Endothelial cell of umbilical vein (primary cell): ENCODE measurements at regions of chr6 and their contacts with region 1.

Region 1: DNA sequence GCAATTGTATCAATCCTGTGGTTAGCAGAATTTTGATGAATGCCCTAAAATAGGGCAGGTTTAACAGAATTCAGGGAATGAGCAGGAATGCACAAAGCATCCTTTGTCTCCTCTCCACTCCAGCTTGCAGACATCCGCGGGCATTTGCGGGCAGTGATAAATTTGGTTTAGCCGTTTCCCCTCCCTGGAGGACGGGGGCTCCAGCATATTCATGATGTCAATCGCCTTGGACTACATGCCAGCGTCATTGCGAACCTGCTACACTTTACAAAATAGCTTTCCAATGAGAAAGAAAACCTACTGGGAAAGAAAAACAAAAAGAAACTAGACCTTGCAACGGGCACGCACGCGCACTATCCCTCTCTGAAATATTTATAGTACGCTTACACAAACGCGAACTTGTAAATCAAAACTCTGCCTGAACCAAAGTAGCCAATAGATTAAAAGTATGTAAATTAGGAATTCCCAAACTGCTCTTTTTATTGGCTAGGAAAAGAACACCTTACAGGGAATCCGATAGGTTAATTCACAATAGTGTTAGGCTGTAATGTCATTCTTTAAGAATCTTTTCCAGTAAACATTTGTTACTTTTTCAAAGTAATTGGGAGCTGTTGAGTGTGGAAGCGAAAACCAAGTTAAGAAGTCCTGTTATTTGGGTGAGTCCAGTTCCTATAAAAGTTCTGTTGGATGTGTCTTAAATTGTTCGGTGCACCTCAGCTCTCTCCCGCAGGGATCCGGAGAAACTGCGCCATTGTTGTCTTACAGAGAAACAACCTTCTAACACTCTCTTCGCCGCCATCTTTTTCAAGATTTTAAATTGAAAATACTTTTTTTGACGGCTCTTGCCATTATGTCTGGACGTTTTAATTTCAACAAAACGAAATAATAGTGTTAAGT is 136.7 kb downstream of the HFE start:
- DNase-seq: peak; percentile 94
- H3K4me3 ChIP-seq: peak overlapping the region; percentile 47 to 94 (median 77)
- H3K27ac ChIP-seq: peak overlapping the region; percentile 96
- H3K4me1 ChIP-seq: peaks cover 14% of the 10 kb centered on the region
- H3K27me3 ChIP-seq: no peaks in the 10 kb centered on the region
- CTCF ChIP-seq: no peak
- POLR2A ChIP-seq: peak; percentile 71

Region 2: DNA sequence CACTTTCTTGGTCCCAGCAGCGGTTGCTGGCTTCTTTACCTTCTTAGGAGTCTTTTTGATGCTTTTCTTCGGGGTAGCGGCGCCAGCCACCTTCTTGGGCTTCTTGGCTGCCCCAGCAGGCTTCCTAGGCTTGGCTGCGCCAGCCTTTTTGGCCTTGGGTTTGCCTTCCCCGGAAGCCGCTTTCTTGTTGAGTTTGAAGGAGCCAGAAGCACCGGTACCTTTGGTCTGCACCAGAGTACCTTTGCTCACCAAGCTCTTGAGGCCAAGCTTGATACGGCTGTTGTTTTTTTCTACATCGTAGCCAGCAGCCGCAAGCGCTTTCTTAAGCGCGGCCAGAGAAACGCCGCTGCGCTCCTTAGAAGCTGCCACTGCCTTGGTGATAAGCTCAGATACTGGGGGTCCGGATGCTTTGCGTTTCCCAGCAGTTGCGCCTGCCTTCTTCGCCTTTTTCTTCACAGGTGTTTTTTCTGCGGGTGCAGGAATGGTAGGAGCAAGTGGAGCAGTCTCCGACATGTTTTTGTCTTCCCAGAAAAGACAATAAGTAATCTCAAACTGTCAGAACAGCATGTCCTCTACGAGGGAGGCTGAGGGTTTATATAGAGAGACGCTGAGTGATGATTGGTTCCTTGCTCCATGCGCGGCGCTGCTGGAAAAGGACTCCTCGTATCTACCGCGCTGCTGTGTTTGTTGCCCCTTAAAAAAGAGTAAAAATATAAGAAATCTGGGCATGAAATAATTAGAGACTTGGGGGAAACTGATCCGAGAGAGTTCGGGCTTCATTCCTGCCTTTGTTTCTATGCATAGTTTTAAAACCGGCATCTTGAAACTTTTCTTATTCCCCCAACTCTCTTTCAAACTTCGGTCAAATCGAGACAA is 10.8 kb after region 1 on chr6:
- CTCF ChIA-PET with region 1: interaction called, 13 read pairs
- POLR2A ChIA-PET with region 1: interaction called, 19 read pairs
- dilution Hi-C with region 1: no loop called
- intact Hi-C with region 1: loop called (anchors 1 kb)
- DNase-seq: peak; percentile 89
- H3K4me3 ChIP-seq: peak overlapping the region; percentile 30 to 73 (median 59)
- H3K27ac ChIP-seq: peak overlapping the region; percentile 83
- H3K4me1 ChIP-seq: peaks cover 25% of the 10 kb centered on the region
- H3K27me3 ChIP-seq: no peaks in the 10 kb centered on the region
- CTCF ChIP-seq: no peak
- POLR2A ChIP-seq: peak; percentile 5

Region 3: GRCh38 chr6:26240154-26241032 is 16.5 kb after region 1 on chr6:
- CTCF ChIA-PET with region 1: interaction called, 3 read pairs
- POLR2A ChIA-PET with region 1: interaction called, 19 read pairs
- dilution Hi-C with region 1: no loop called
- intact Hi-C with region 1: loop called (anchors 2 kb)
- DNase-seq: peak; percentile 85
- H3K4me3 ChIP-seq: peak overlapping the region; percentile 40 to 77 (median 66)
- H3K27ac ChIP-seq: peak overlapping the region; percentile 79
- H3K4me1 ChIP-seq: peaks cover 3% of the 10 kb centered on the region
- H3K27me3 ChIP-seq: no peaks in the 10 kb centered on the region
- CTCF ChIP-seq: no peak
- POLR2A ChIP-seq: peak; percentile 98

Region 4: DNA sequence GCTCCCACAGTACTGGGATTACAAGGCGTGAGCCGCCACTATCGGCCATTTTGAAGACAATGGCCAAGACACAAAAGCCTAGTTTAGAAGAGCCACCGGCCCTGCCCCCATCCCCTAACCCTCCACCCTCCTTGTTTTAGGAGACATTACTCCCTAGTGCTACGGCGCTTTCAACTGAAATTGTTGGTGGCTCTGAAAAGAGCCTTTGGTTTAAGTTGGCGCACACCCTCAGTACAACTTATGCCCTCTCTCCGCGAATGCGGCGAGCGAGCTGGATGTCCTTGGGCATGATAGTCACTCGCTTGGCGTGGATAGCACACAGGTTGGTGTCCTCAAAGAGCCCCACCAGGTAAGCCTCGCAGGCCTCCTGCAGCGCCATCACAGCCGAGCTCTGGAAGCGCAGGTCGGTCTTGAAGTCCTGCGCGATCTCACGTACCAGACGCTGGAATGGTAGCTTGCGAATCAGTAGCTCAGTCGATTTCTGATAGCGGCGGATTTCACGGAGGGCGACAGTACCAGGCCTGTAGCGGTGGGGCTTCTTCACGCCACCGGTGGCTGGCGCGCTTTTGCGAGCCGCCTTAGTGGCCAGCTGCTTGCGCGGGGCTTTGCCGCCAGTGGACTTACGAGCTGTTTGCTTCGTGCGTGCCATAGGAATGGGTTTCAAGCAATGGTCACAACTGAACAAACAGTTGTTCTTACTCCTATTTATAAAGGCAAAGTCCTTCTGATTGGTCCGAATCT is 26.2 kb after region 1 on chr6:
- CTCF ChIA-PET with region 1: interaction called, 28 read pairs
- POLR2A ChIA-PET with region 1: interaction called, 19 read pairs
- dilution Hi-C with region 1: no loop called
- intact Hi-C with region 1: loop called (anchors 1 kb)
- DNase-seq: peak; percentile 87
- H3K4me3 ChIP-seq: peak overlapping the region; percentile 27 to 85 (median 49)
- H3K27ac ChIP-seq: peak overlapping the region; percentile 67
- H3K4me1 ChIP-seq: peaks cover 3% of the 10 kb centered on the region
- H3K27me3 ChIP-seq: no peaks in the 10 kb centered on the region
- CTCF ChIP-seq: peak; percentile 28 to 52
- POLR2A ChIP-seq: peak; percentile 87

Region 5: DNA sequence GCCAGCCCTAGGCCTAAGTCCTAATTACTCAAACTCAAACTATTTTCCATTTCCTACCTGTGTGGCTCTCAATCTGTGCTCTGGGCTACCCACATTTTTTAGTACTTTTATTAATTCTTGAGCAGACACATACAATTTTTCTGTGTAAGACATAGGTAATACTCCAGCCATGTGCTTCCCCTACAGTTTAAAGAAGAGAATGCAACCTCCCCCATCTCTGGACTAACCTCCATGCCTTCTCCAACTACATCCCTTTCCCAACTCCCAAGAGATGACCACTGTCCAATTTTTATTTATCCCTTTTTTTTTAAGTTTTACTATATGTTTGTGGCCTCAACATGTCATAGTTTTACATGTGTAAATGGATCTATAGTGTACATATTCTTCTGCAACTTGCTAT is 320.1 kb after region 1 on chr6:
- CTCF ChIA-PET with region 1: no interaction called
- POLR2A ChIA-PET with region 1: no interaction called
- dilution Hi-C with region 1: no loop called
- intact Hi-C with region 1: no loop called
- DNase-seq: peak; percentile 21
- H3K4me3 ChIP-seq: no peak overlapping the region
- H3K27ac ChIP-seq: no peak overlapping the region
- H3K4me1 ChIP-seq: peaks cover 3% of the 10 kb centered on the region
- H3K27me3 ChIP-seq: no peaks in the 10 kb centered on the region
- CTCF ChIP-seq: peak; percentile 18 to 35
- POLR2A ChIP-seq: no peak